Activated CD8-positive, alpha-beta T cell treated with anti-CD3 and anti-CD28 coated beads for 36 hours (primary cell): ENCODE measurements at regions of chr21 and their contacts with region 1.

Region 1: GRCh38 chr21:34888569-34889319 is 160.4 kb downstream of the RUNX1 start:
- DNase-seq: peak; percentile 87
- ATAC-seq: peak; percentile 50
- H3K4me3 Mint-ChIP-seq: peak overlapping the region; percentile 93
- H3K27ac Mint-ChIP-seq: peak overlapping the region; percentile 98
- H3K4me1 Mint-ChIP-seq: peaks cover 42% of the 10 kb centered on the region
- H3K27me3 Mint-ChIP-seq: peaks cover 1% of the 10 kb centered on the region
- CTCF ChIP-seq: no peak

Region 2: GRCh38 chr21:34722684-34723300 is 166.0 kb before region 1 on chr21:
- CTCF ChIA-PET with region 1: no interaction called
- POLR2A ChIA-PET with region 1: no interaction called
- intact Hi-C with region 1: no loop called
- DNase-seq: peak; percentile 53
- ATAC-seq: peak; percentile 39
- H3K4me3 Mint-ChIP-seq: no peak overlapping the region
- H3K27ac Mint-ChIP-seq: no peak overlapping the region
- H3K4me1 Mint-ChIP-seq: peaks cover 2% of the 10 kb centered on the region
- H3K27me3 Mint-ChIP-seq: peaks cover 6% of the 10 kb centered on the region
- CTCF ChIP-seq: peak; percentile 93

Region 3: GRCh38 chr21:34745557-34746255 is 143.0 kb before region 1 on chr21:
- CTCF ChIA-PET with region 1: interaction called, 14 read pairs
- POLR2A ChIA-PET with region 1: no interaction called
- intact Hi-C with region 1: loop called (anchors 10 kb)
- DNase-seq: peak; percentile 69
- ATAC-seq: peak; percentile 95
- H3K4me3 Mint-ChIP-seq: peak overlapping the region; percentile 44
- H3K27ac Mint-ChIP-seq: peak overlapping the region; percentile 30
- H3K4me1 Mint-ChIP-seq: peaks cover 3% of the 10 kb centered on the region
- H3K27me3 Mint-ChIP-seq: peaks cover 11% of the 10 kb centered on the region
- CTCF ChIP-seq: peak; percentile 91

Region 4: GRCh38 chr21:34900376-34900775 is 11.6 kb after region 1 on chr21:
- CTCF ChIA-PET with region 1: interaction called, 9 read pairs
- POLR2A ChIA-PET with region 1: interaction called, 30 read pairs
- intact Hi-C with region 1: no loop called
- DNase-seq: no peak
- ATAC-seq: peak; percentile 45
- H3K4me3 Mint-ChIP-seq: no peak overlapping the region
- H3K27ac Mint-ChIP-seq: no peak overlapping the region
- H3K4me1 Mint-ChIP-seq: peaks cover 31% of the 10 kb centered on the region
- H3K27me3 Mint-ChIP-seq: no peaks in the 10 kb centered on the region
- CTCF ChIP-seq: no peak

Region 5: DNA sequence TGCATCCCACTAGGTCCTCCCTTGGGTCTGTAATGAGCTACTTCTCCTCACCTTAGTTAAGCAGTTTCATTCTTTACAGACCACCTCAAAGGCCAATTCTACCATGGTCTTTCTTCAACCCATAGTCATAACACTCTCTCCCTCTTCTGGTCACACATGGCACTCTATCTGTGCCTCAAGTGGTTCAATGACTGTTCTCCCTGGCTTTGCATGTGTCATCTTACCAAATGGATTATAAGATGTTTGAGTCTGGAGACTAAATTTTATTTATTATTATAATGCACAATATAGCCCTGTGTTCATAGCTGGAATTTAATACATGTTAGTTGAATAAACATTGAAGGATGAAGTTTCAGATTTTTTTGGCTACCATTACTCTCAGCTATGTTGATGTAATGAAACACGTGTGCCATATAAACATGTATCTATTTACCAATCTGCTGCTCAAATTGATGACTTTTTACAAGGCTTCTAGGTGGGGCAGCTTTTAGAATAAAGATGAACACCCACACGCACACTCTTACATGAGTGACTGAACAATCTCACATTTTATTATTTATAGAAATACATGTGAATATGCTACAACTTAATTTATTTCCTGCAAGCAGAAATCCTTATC is 58.3 kb after region 1 on chr21:
- CTCF ChIA-PET with region 1: interaction called, 19 read pairs
- POLR2A ChIA-PET with region 1: interaction called, 9 read pairs
- intact Hi-C with region 1: no loop called
- DNase-seq: no peak
- ATAC-seq: peak; percentile 67
- H3K4me3 Mint-ChIP-seq: no peak overlapping the region
- H3K27ac Mint-ChIP-seq: peak overlapping the region; percentile 95
- H3K4me1 Mint-ChIP-seq: peaks cover 86% of the 10 kb centered on the region
- H3K27me3 Mint-ChIP-seq: no peaks in the 10 kb centered on the region
- CTCF ChIP-seq: peak; percentile 42

Region 6: GRCh38 chr21:34967509-34968289 is 79.0 kb after region 1 on chr21:
- CTCF ChIA-PET with region 1: interaction called, 13 read pairs
- POLR2A ChIA-PET with region 1: interaction called, 27 read pairs
- intact Hi-C with region 1: no loop called
- DNase-seq: peak; percentile 75
- ATAC-seq: peak; percentile 74
- H3K4me3 Mint-ChIP-seq: peak overlapping the region; percentile 29
- H3K27ac Mint-ChIP-seq: peak overlapping the region; percentile 89
- H3K4me1 Mint-ChIP-seq: peaks cover 87% of the 10 kb centered on the region
- H3K27me3 Mint-ChIP-seq: peaks cover 3% of the 10 kb centered on the region
- CTCF ChIP-seq: no peak

Region 7: GRCh38 chr21:34986561-34987500 is 98.1 kb after region 1 on chr21:
- CTCF ChIA-PET with region 1: interaction called, 23 read pairs
- POLR2A ChIA-PET with region 1: interaction called, 32 read pairs
- intact Hi-C with region 1: loop called (anchors 5 kb)
- DNase-seq: peak; percentile 94
- ATAC-seq: peak; percentile 46
- H3K4me3 Mint-ChIP-seq: peak overlapping the region; percentile 72
- H3K27ac Mint-ChIP-seq: peak overlapping the region; percentile 92
- H3K4me1 Mint-ChIP-seq: peaks cover 91% of the 10 kb centered on the region
- H3K27me3 Mint-ChIP-seq: no peaks in the 10 kb centered on the region
- CTCF ChIP-seq: no peak

Region 8: GRCh38 chr21:35095859-35096291 is 207.1 kb after region 1 on chr21:
- CTCF ChIA-PET with region 1: no interaction called
- POLR2A ChIA-PET with region 1: interaction called, 3 read pairs
- intact Hi-C with region 1: loop called (anchors 2 kb)
- DNase-seq: peak; percentile 17
- ATAC-seq: peak; percentile 41
- H3K4me3 Mint-ChIP-seq: no peak overlapping the region
- H3K27ac Mint-ChIP-seq: peak overlapping the region; percentile 74
- H3K4me1 Mint-ChIP-seq: peaks cover 25% of the 10 kb centered on the region
- H3K27me3 Mint-ChIP-seq: peaks cover 2% of the 10 kb centered on the region
- CTCF ChIP-seq: no peak